Activated T-helper 1 cell treated with anti-CD3 and anti-CD28 coated beads, Interleukin-12 subunit alpha, Interleukin-12 subunit beta, Interleukin-2, Interleukin-4 antibody, amounts not matched to agents 30 ng/mL and 10 ng/mL and 1 ng/mL, durations not matched to agents 14 hours and 24 hours and 36 hours (primary cell): ENCODE measurements at regions of chr14 and their contacts with region 1.

Region 1: GRCh38 chr14:67599698-67600561 is at the start of gene PIGH:
- DNase-seq: peak; percentile 92
- H3K4me3 Mint-ChIP-seq: peak within 1 kb of the TSS; percentile 99
- H3K27ac Mint-ChIP-seq: peak within 1 kb of the TSS; percentile 94
- H3K4me1 Mint-ChIP-seq: peaks cover 44% of the 10 kb centered on the region
- H3K27me3 Mint-ChIP-seq: peaks cover 18% of the 10 kb centered on the region
- total RNA-seq, gene PIGH: 22.7 and 26.0 TPM in 2 replicates

Region 2: DNA sequence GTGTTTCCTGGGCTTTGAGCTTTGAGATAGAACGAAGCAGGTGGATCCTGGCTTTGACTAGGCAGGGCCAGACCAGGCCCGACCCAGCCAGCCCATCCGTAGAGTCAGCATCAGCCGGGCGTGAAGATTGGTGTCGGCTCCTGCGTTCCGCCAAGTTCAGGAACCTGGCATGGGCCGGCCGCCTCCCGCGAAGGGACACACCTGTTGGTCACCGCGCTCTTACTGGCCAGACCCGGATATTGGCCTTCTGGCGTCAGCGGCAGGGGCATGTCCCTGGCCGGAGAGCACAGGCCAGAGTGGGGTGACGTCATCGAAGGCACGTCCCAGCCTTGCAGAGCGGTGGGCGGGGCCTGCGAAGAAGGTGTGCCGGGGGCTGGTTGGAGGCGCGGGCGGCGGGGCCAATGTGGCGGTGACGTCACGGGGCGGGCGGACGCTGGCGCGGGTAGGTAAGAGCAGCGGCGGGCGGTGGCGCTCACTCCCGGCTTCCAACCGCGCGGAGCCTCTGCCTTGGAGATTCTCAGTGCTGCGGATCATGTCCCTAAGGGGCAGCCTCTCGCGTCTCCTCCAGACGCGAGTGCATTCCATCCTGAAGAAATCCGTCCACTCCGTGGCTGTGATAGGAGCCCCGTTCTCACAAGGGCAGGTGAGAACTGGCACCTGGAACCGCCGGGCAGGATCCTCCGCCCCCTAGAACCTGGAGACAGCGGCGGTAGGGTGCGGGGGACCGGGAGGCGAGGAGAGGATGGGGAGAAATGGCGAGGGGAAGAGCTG is 19.7 kb after region 1 on chr14 and contains the start of gene ARG2:
- intact Hi-C with region 1: loop called (anchors 1 kb)
- DNase-seq: peak; percentile 94
- H3K4me3 Mint-ChIP-seq: peak within 1 kb of the TSS; percentile 86
- H3K27ac Mint-ChIP-seq: peak within 1 kb of the TSS; percentile 71
- H3K4me1 Mint-ChIP-seq: peaks cover 39% of the 10 kb centered on the region
- H3K27me3 Mint-ChIP-seq: peaks cover 14% of the 10 kb centered on the region
- total RNA-seq, gene ARG2: 5.2 and 7.1 TPM in 2 replicates

Region 3: GRCh38 chr14:67674481-67675169 is 74.7 kb after region 1 on chr14 and contains the start of gene VTI1B:
- intact Hi-C with region 1: loop called (anchors 2 kb)
- DNase-seq: peak; percentile 70
- H3K4me3 Mint-ChIP-seq: peak within 1 kb of the TSS; percentile 90
- H3K27ac Mint-ChIP-seq: peak within 1 kb of the TSS; percentile 87
- H3K4me1 Mint-ChIP-seq: peaks cover 41% of the 10 kb centered on the region
- H3K27me3 Mint-ChIP-seq: no peaks in the 10 kb centered on the region
- total RNA-seq, gene VTI1B: 77.7 and 77.8 TPM in 2 replicates

Region 4: GRCh38 chr14:67892466-67893100 is 292.7 kb after region 1 on chr14:
- intact Hi-C with region 1: no loop called
- DNase-seq: no peak
- H3K4me3 Mint-ChIP-seq: no peak overlapping the region
- H3K27ac Mint-ChIP-seq: no peak overlapping the region
- H3K4me1 Mint-ChIP-seq: no peaks in the 10 kb centered on the region
- H3K27me3 Mint-ChIP-seq: no peaks in the 10 kb centered on the region